AG04450 (cell line): ENCODE measurements at regions of chr15 and their contacts with region 1.

Region 1: GRCh38 chr15:99704444-99704838 is 28.8 kb downstream of the LYSMD4 start:
- DNase-seq: peak; percentile 84
- H3K4me3 ChIP-seq: no peak overlapping the region
- H3K27ac ChIP-seq: no peak overlapping the region
- H3K27me3 ChIP-seq: no peaks in the 10 kb centered on the region
- CTCF ChIP-seq: peak; percentile 74

Region 2: DNA sequence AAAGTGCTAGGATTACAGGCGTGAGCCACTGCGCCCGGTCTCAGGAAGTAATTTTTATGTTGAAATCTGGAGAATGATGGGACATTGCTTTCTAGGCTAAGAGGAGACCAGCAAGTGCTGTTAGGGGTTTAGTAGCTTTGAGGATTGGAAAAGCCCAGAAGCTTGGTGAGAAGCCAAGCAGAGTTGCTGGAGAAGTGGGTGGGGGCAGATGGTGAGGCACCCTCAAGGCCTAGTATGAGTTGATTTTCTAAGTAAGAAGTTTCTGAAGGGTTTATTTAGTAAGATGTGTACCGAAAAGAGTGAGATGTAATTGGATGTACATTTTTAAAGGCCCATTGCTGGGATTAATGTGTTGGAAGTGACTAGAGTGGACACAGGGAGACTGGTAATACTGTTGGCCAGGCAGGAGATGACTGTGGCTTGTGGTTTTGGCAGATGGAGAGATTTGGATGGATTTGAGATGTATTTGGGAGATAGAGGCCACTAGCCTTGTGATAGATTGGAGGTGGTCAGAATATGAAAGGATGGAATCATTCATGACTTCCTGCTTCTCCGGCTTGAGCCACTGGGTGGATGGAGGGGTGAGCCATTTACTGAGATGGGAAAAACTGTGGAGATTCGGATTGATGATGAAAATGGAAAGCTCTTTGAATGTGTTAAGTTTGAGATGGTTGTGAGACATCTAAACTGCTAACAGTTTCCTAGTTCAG is 450.9 kb before region 1 on chr15:
- CTCF ChIA-PET with region 1: interaction called, 22 read pairs
- POLR2A ChIA-PET with region 1: interaction called, 3 read pairs
- DNase-seq: no peak
- H3K4me3 ChIP-seq: no peak overlapping the region
- H3K27ac ChIP-seq: no peak overlapping the region
- H3K27me3 ChIP-seq: no peaks in the 10 kb centered on the region
- CTCF ChIP-seq: 0 out of 2 replicates have a peak, but pooled peaks have one; percentile 11

Region 3: GRCh38 chr15:99315636-99316035 is 388.8 kb before region 1 on chr15:
- CTCF ChIA-PET with region 1: interaction called, 22 read pairs
- POLR2A ChIA-PET with region 1: no interaction called
- DNase-seq: no peak
- H3K4me3 ChIP-seq: no peak overlapping the region
- H3K27ac ChIP-seq: no peak overlapping the region
- H3K27me3 ChIP-seq: no peaks in the 10 kb centered on the region
- CTCF ChIP-seq: no peak

Region 4: GRCh38 chr15:99371180-99372103 is 333.0 kb before region 1 on chr15:
- CTCF ChIA-PET with region 1: interaction called, 15 read pairs
- POLR2A ChIA-PET with region 1: no interaction called
- DNase-seq: no peak
- H3K4me3 ChIP-seq: no peak overlapping the region
- H3K27ac ChIP-seq: no peak overlapping the region
- H3K27me3 ChIP-seq: no peaks in the 10 kb centered on the region
- CTCF ChIP-seq: no peak

Region 5: GRCh38 chr15:99452774-99453636 is 251.4 kb before region 1 on chr15:
- CTCF ChIA-PET with region 1: interaction called, 38 read pairs
- POLR2A ChIA-PET with region 1: no interaction called
- DNase-seq: no peak
- H3K4me3 ChIP-seq: no peak overlapping the region
- H3K27ac ChIP-seq: no peak overlapping the region
- H3K27me3 ChIP-seq: no peaks in the 10 kb centered on the region
- CTCF ChIP-seq: no peak

Region 6: GRCh38 chr15:99538261-99538660 is 166.2 kb before region 1 on chr15:
- CTCF ChIA-PET with region 1: no interaction called
- POLR2A ChIA-PET with region 1: no interaction called
- DNase-seq: no peak
- H3K4me3 ChIP-seq: no peak overlapping the region
- H3K27ac ChIP-seq: no peak overlapping the region
- H3K27me3 ChIP-seq: no peaks in the 10 kb centered on the region
- CTCF ChIP-seq: no peak

Region 7: DNA sequence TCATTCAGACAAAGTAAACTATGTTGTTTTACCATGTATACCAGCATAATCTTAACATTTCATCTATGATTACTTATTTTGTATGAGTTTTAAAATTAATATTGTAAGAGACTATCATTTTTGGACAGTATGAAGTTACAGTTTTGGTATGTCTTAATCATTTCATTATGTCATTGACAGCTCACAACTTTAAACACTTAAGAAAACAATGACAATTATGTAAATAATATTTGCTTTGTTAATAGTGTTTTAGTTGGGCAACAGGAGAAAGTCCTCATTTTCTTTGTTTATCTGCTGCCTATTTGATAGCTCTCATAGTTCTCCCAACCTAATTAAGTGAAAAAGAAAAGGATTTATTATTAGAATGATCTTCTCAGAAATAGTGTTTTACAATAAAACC is 58.5 kb before region 1 on chr15:
- CTCF ChIA-PET with region 1: interaction called, 18 read pairs
- POLR2A ChIA-PET with region 1: no interaction called
- DNase-seq: no peak
- H3K4me3 ChIP-seq: no peak overlapping the region
- H3K27ac ChIP-seq: no peak overlapping the region
- H3K27me3 ChIP-seq: no peaks in the 10 kb centered on the region
- CTCF ChIP-seq: no peak

Region 8: DNA sequence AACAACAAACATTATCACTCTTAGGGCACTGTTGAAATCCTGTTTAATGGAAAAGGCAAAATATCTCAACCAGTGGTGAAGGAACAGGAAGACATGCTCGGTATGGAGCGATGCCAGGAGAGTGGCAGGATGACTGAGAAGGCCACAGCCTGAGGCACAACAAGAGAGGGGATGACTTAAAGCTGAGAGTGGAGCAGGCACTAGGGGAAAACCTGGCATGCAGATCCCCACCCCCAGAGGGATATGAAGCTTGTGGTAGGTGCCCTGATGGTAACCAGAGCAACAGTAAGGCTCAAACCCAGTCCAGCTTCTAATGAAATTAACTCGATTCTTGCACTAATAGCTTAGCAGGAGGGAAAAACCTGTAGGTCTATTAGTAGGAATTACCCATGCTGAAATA is 11.6 kb before region 1 on chr15:
- CTCF ChIA-PET with region 1: interaction called, 34 read pairs
- POLR2A ChIA-PET with region 1: no interaction called
- DNase-seq: no peak
- H3K4me3 ChIP-seq: no peak overlapping the region
- H3K27ac ChIP-seq: no peak overlapping the region
- H3K27me3 ChIP-seq: no peaks in the 10 kb centered on the region
- CTCF ChIP-seq: no peak